ENCODE measurements at regions of chr18 and their contacts with region 1.

Region 1: DNA sequence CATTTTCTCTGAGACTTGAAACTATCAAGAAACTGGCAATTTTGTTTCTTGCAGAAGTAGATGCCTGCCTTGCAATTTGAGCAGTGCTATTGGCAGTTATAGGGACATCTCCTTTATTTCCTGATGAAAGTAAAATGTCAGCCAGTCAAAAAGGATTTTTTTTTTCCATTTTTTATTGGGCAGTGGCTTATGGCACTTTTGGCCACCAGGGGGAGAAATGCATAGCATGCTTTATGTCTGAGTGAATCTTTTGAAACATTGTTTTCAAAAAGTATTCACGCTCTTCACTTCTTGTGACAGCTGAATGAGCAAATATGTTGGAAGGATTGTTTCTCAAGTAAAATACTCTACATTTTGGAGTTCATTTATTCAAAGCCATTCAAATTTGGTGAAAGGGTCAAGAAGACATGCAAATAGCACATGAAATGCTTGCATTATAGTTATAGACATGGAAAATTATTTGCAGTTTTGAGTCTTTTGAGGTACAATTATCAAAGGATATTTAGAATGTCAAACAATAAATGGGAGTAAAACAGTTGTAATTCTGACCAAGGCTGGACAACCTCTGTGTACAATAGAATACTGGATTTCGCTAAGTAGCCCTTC is 491.0 kb downstream of the CDH2 start:
- DNase-seq: no peak
- H3K4me3 Mint-ChIP-seq: no peak overlapping the region
- H3K27ac Mint-ChIP-seq: no peak overlapping the region
- H3K4me1 Mint-ChIP-seq: no peaks in the 10 kb centered on the region
- H3K27me3 Mint-ChIP-seq: no peaks in the 10 kb centered on the region

Region 2: DNA sequence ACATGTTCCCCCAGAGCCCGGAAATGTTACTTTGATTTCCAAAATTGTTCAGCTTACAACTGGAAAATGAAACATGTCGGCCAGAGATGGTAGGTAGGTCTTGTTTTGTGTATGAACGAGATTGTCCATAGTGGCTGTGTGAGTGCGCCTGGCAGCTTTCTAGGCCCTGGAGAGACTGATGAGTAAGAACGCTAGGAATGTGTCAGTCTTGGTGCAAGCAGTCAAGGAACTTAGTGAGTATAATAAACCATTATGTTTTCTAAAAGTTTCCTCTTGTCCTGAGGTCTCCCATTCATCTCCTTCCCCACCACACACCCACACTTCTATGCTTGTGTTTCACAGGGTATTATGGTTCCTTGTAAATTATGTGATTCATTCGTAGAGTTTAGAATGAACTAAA is 256.8 kb after region 1 on chr18:
- intact Hi-C with region 1: no loop called
- DNase-seq: no peak
- H3K4me3 Mint-ChIP-seq: no peak overlapping the region
- H3K27ac Mint-ChIP-seq: no peak overlapping the region
- H3K4me1 Mint-ChIP-seq: no peaks in the 10 kb centered on the region
- H3K27me3 Mint-ChIP-seq: no peaks in the 10 kb centered on the region

Region 3: GRCh38 chr18:28189400-28190239 is 503.7 kb after region 1 on chr18:
- intact Hi-C with region 1: loop called (anchors 5 kb)
- DNase-seq: no peak
- H3K4me3 Mint-ChIP-seq: no peak overlapping the region
- H3K27ac Mint-ChIP-seq: no peak overlapping the region
- H3K4me1 Mint-ChIP-seq: no peaks in the 10 kb centered on the region
- H3K27me3 Mint-ChIP-seq: no peaks in the 10 kb centered on the region